ENCODE measurements at regions of chr5 and their contacts with region 1.

Region 1: DNA sequence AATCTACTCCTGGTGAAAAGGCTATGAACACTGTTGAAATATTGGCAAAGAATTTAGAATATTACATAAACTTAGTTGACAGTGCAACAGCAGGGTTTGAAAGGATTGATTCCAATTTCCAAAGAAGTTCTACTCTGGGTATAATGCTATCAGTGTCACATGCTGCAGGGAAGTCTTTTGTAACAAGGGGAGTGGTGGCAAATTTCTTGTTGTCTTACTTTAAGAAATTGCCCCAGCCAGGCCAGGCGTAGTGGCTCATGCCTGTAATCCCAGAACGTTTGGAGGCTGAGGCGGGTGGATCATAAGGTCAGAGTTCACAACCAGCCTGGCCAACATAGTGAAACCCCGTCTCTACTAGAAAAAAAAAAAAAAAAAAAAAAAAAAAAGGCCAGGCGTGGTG is 86.3 kb upstream of the OTULINL start:
- DNase-seq: no peak
- ATAC-seq: no peak
- H3K4me3 ChIP-seq: no peak overlapping the region
- H3K4me3 Mint-ChIP-seq: no peak overlapping the region
- H3K27ac ChIP-seq: no peak overlapping the region
- H3K27ac Mint-ChIP-seq: no peak overlapping the region
- H3K4me1 ChIP-seq: no peaks in the 10 kb centered on the region
- H3K4me1 Mint-ChIP-seq: peaks cover 0 to 2% (median 0%) of the 10 kb centered on the region in 3 donors
- H3K27me3 ChIP-seq: no peaks in the 10 kb centered on the region
- H3K27me3 Mint-ChIP-seq: no peaks in the 10 kb centered on the region

Region 2: GRCh38 chr5:14131855-14132503 is 363.3 kb before region 1 on chr5:
- CTCF ChIA-PET with region 1: no interaction called
- POLR2A ChIA-PET with region 1: no interaction called
- DNase-seq: no peak
- ATAC-seq: no peak
- H3K4me3 ChIP-seq: no peak overlapping the region
- H3K4me3 Mint-ChIP-seq: no peak overlapping the region
- H3K27ac ChIP-seq: no peak overlapping the region
- H3K27ac Mint-ChIP-seq: no peak overlapping the region
- H3K4me1 ChIP-seq: no peaks in the 10 kb centered on the region
- H3K4me1 Mint-ChIP-seq: no peaks in the 10 kb centered on the region
- H3K27me3 ChIP-seq: peaks cover 0 to 13% of the 10 kb centered on the region in 2 experiments
- H3K27me3 Mint-ChIP-seq: peaks cover 18 to 29% of the 10 kb centered on the region in 2 donors

Region 3: DNA sequence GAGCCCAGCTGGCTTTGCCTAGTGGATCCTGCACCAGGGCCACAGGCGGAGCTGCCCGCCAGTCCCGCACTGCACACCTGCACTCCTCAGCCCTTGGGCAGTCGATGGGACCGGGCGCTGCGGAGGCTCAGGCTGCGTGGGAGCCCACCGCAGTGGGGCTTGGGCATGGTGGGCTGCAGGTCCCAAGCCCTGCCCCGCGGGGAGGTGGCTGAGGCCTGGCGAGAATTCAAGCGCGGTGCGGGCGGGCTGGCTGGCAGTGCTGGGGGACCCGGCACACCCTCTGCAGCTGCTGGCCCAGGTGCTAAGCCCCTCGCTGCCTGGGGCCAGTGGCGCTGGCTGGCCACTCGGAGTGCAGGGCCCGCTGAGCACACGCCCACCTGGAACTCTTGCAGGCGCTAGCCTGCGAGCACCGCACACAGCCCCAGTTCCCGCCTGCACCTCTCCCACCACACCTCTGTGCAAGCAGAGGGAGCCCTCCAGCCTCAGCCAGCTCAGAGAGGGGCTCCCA is 39.4 kb before region 1 on chr5:
- CTCF ChIA-PET with region 1: no interaction called
- POLR2A ChIA-PET with region 1: interaction called in 1 of 2 experiments, 12 read pairs
- DNase-seq: no peak
- ATAC-seq: no peak
- H3K4me3 ChIP-seq: no peak overlapping the region
- H3K4me3 Mint-ChIP-seq: no peak overlapping the region
- H3K27ac ChIP-seq: no peak overlapping the region
- H3K27ac Mint-ChIP-seq: no peak overlapping the region
- H3K4me1 ChIP-seq: peaks cover 0 to 2% of the 10 kb centered on the region in 2 experiments
- H3K4me1 Mint-ChIP-seq: no peaks in the 10 kb centered on the region
- H3K27me3 ChIP-seq: no peaks in the 10 kb centered on the region
- H3K27me3 Mint-ChIP-seq: no peaks in the 10 kb centered on the region

Measured in T-cell (primary cell).